ENCODE measurements at regions of chr16 and their contacts with region 1.

Region 1: GRCh38 chr16:4802659-4803287 is 340 bp upstream of the ROGDI start:
- DNase-seq: peak; percentile 87 to 98 (median 94)

Region 2: GRCh38 chr16:4766874-4767628 is 35.7 kb before region 1 on chr16 and contains the start of gene ZNF500:
- intact Hi-C with region 1: loop called (anchors 5 kb)
- DNase-seq: peak; percentile 97 to 100 (median 99)